K562 (cell line): ENCODE measurements at regions of chr3 and their contacts with region 1.

Region 1: DNA sequence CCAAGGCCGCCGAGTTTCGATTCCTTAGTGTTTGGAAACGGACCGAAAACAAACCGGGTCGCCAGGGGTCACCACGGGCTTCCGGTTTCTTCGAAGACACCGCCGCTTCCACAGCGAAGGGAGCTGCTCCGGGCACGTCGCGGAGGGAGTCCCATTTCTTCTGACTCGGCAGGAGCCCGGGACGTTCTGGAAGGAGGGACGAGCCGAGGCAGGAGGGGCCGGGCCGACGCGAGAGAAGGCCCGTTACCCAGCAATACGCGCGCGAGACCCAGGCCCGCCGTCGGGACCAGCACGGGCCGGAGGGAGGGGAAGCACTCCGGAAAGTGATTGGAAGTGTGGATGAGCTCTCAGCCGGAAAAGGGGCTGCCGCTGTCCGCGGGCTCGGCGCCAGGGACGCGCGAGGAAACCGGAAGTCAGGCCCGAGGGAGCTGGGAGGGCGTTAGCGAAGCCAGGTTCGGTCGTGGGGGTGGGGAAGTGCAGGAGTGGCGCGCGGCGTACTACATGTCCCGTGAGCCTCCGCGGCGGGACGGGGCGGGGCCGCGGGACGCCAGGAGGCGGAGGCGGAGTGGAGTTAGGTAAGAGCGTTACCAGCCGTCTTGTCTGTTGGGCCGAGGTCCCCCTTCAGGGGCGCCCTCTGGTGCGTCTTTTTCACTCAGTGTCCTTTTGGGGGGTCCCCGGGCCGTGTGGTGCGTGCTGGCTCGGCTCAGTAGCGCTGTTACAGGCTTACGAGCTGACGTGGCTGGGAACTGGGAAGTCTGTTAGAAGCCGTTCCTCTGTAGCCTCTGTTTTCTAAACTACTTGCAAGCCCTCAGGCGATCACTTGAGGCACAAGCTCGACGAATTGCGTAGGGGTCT is at the starts of genes AZI2 and ZCWPW2:
- DNase-seq: peak; percentile 88 to 99 (median 90)
- ATAC-seq: peak; percentile 93
- H3K4me3 ChIP-seq: peak within 1 kb of the TSS; percentile 65
- H3K27ac ChIP-seq: peak within 1 kb of the TSS; percentile 99
- H3K4me1 ChIP-seq: peaks cover 4 to 10% of the 10 kb centered on the region in 2 experiments; a peak in 3 of 5 replicates
- H3K27me3 ChIP-seq: no peaks in the 10 kb centered on the region
- CTCF ChIP-seq: peak; percentile 40 to 50 (median 45); a peak in 5 of 6 replicates
- EP300 ChIP-seq: peak; percentile 25; the same call in 1 of the 2 replicates
- POLR2A ChIP-seq: peak; percentile 95
- RAD21 ChIP-seq: no peak; a peak in 1 of 4 replicates
- polyA plus RNA-seq, gene AZI2: 72.0 to 90.2 TPM
- polyA plus RNA-seq, gene ZCWPW2: 0.62 to 0.73 TPM

Region 2: GRCh38 chr3:28241221-28242160 is 107.4 kb before region 1 on chr3 and contains the start of gene CMC1:
- CTCF ChIA-PET with region 1: no interaction called
- POLR2A ChIA-PET with region 1: interaction called, 3 read pairs
- in situ Hi-C with region 1: no loop called
- intact Hi-C with region 1: loop called (anchors 2 kb)
- DNase-seq: peak; percentile 96 to 99 (median 97)
- ATAC-seq: peak; percentile 98
- H3K4me3 ChIP-seq: peak within 1 kb of the TSS; percentile 88
- H3K27ac ChIP-seq: peak within 1 kb of the TSS; percentile 91
- H3K4me1 ChIP-seq: peaks cover 20 to 26% of the 10 kb centered on the region in 2 experiments
- H3K27me3 ChIP-seq: no peaks in the 10 kb centered on the region
- CTCF ChIP-seq: peak in 1 of 3 experiments; percentile 1; a peak in 1 of 6 replicates
- EP300 ChIP-seq: no peak
- POLR2A ChIP-seq: peak; percentile 97
- RAD21 ChIP-seq: no peak
- polyA plus RNA-seq, gene CMC1: 48.9 to 56.8 TPM